ENCODE measurements at regions of chr12 and their contacts with region 1.

Region 1: GRCh38 chr12:21627924-21628323 is 23.3 kb upstream of the GYS2 start:
- DNase-seq: no peak
- H3K4me3 ChIP-seq: no peak overlapping the region
- H3K27ac ChIP-seq: no peak overlapping the region
- H3K4me1 ChIP-seq: no peaks in the 10 kb centered on the region
- H3K27me3 ChIP-seq: no peaks in the 10 kb centered on the region
- CTCF ChIP-seq: no peak
- POLR2A ChIP-seq: no peak

Region 2: DNA sequence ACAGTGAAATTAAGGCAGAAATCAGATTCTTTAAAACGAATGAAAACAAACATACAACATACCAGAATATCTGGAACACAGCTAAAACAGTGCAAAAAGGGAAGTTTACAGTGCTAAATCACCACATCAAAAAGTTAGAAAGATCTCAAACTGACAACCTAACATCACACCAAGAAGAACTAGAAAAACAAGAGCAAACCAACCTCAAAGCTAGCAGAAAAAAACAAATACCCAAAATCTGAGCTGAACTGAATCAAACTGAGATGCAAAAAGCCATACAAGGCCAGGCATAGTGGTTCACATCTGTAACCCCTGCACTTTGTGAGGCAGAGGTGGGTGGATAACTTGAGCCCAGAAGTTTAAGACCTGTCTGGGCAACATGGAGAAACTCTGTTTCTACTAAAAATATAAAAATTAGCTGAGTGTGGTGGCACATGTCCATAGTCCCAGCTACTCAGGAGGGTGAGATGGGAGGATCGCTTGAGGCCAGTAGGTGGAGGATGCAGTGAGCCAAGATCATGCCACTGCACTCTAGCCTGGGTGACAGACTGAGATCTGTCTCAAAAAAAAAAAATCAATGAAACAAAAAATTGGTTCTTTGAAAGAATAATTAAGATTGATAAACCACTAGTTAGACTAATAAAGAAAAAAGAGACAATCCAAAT is 62.9 kb after region 1 on chr12:
- intact Hi-C with region 1: loop called (anchors 2 kb)
- DNase-seq: no peak
- H3K4me3 ChIP-seq: no peak overlapping the region
- H3K27ac ChIP-seq: no peak overlapping the region
- H3K4me1 ChIP-seq: no peaks in the 10 kb centered on the region
- H3K27me3 ChIP-seq: no peaks in the 10 kb centered on the region
- CTCF ChIP-seq: no peak
- POLR2A ChIP-seq: no peak

Measured in breast epithelium (tissue), 4 donors.